ENCODE measurements at regions of chr1 and their contacts with region 1.

Region 1: GRCh38 chr1:64834734-64835133 is 89.9 kb downstream of the RAVER2 start:
- DNase-seq: no peak
- H3K4me3 ChIP-seq: no peak overlapping the region
- H3K27ac ChIP-seq: no peak overlapping the region
- H3K4me1 ChIP-seq: no peaks in the 10 kb centered on the region
- H3K27me3 ChIP-seq: no peaks in the 10 kb centered on the region
- CTCF ChIP-seq: no peak
- POLR2A ChIP-seq: no peak

Region 2: DNA sequence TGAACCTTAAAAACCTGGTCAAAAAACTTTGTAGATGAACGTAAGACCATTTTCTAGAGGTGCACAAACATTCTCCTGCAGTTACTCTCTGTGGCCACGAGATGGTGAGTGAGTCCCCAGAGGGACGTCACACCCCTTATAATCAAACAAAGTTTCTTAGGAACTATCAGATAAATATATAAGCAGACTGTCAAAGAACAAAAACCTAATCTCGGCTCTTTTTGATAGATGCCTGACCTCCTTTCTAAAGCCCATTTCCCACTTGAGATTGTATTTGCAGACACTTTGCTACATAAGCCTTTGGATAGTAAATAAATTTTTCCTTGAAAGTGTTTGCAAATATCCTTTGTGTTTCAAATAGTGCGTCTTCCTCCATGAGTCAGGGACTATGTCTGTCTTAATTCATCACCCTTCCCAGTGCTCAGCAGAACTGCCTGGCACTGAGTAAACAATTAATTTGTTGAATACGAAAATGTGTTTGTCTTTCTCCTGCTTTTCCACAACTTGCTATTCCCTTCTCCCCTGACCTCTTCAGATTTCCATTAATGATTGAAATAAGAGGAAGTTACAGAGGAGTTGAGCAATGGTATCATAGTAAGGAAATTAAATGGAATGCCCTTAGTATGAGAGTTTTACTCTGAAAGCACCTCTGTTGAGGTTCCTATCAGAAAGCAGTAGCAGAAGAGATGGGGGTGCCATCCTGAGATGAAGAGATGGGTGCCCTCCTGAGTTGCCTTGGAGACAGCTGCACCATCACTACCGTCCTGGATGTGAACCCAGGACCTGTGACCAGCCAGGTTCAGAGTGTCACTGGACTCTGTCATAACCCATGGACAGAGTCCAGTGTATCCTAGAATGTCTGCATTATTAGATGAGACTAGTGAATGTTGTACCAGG is 147.7 kb before region 1 on chr1:
- intact Hi-C with region 1: loop called (anchors 5 kb)
- DNase-seq: no peak
- H3K4me3 ChIP-seq: no peak overlapping the region
- H3K27ac ChIP-seq: peak overlapping the region; percentile 26 to 28
- H3K4me1 ChIP-seq: no peaks in the 10 kb centered on the region
- H3K27me3 ChIP-seq: no peaks in the 10 kb centered on the region
- CTCF ChIP-seq: peak; percentile 72 to 83 (median 82)
- POLR2A ChIP-seq: no peak

Measured in breast epithelium (tissue), 4 donors.